BJ (cell line): ENCODE measurements at regions of chr1 and their contacts with region 1.

Region 1: DNA sequence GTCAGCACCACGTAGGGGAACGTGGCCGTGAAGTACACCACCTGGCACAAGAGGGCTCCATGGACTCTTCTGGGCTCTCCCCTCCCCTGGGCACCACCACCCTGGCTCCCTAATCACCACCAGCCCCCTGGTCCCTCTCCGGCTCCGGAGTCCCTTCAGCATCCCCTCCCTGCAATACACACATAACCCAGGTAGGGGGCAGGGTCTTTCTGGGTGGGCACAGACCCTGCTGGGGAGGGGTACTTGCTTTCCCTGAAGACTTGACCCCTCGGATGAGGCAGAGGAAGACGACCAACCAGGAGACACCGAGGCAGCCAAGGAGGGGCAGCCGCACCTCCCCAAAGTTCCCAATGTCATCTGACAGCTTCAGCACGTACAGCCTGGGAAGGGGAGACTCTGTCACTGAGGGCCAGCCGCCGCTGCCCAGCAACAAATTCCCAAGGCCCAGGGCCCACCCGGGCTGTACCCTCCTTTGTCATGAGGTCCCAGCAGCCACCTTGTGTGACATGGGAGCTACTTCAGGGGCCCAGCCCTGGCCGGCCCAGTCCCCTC is 11.3 kb downstream of the CCDC24 start:
- DNase-seq: no peak
- H3K4me3 ChIP-seq: no peak overlapping the region
- H3K27me3 ChIP-seq: no peaks in the 10 kb centered on the region
- CTCF ChIP-seq: peak; percentile 20; the same call in 1 of the 2 replicates

Region 2: GRCh38 chr1:44012941-44013609 is 10.4 kb after region 1 on chr1:
- CTCF ChIA-PET with region 1: interaction called, 31 read pairs
- POLR2A ChIA-PET with region 1: no interaction called
- DNase-seq: no peak
- H3K4me3 ChIP-seq: no peak overlapping the region
- H3K27me3 ChIP-seq: no peaks in the 10 kb centered on the region
- CTCF ChIP-seq: no peak

Region 3: GRCh38 chr1:44029906-44030604 is 27.4 kb after region 1 on chr1:
- CTCF ChIA-PET with region 1: interaction called, 96 read pairs
- POLR2A ChIA-PET with region 1: no interaction called
- DNase-seq: peak; percentile 57
- H3K4me3 ChIP-seq: peak overlapping the region; percentile 97
- H3K27me3 ChIP-seq: no peaks in the 10 kb centered on the region
- CTCF ChIP-seq: no peak

Region 4: GRCh38 chr1:44049839-44050238 is 47.2 kb after region 1 on chr1:
- CTCF ChIA-PET with region 1: interaction called, 197 read pairs
- POLR2A ChIA-PET with region 1: interaction called, 4 read pairs
- DNase-seq: peak; percentile 87
- H3K4me3 ChIP-seq: no peak overlapping the region
- H3K27me3 ChIP-seq: no peaks in the 10 kb centered on the region
- CTCF ChIP-seq: no peak